ENCODE measurements at regions of chr3 and their contacts with region 1.

Region 1: DNA sequence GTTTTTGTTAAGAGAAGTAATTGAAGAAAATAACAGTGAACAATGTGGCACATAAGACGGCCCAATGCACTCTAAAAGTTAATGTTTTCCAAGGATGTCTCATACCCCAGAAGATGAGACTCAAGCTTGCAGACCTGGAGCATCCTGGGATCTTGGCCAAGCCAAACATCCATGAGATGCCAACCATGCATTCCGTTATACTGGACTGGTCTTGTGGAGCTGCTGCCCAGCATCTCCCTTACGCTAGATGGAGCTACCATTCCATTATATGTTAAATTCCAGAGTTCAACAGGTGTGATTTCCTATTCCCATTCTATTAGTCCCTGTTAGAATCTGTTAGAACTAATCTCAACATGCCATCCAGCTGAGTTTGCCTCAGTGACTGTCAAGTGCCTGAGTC is 181.8 kb downstream of the PDCD6IP start:
- DNase-seq: no peak
- H3K4me3 ChIP-seq: no peak overlapping the region
- H3K27ac ChIP-seq: no peak overlapping the region
- H3K4me1 ChIP-seq: no peaks in the 10 kb centered on the region
- H3K27me3 ChIP-seq: no peaks in the 10 kb centered on the region
- CTCF ChIP-seq: peak in 2 of 3 experiments; percentile 33 to 70

Region 2: DNA sequence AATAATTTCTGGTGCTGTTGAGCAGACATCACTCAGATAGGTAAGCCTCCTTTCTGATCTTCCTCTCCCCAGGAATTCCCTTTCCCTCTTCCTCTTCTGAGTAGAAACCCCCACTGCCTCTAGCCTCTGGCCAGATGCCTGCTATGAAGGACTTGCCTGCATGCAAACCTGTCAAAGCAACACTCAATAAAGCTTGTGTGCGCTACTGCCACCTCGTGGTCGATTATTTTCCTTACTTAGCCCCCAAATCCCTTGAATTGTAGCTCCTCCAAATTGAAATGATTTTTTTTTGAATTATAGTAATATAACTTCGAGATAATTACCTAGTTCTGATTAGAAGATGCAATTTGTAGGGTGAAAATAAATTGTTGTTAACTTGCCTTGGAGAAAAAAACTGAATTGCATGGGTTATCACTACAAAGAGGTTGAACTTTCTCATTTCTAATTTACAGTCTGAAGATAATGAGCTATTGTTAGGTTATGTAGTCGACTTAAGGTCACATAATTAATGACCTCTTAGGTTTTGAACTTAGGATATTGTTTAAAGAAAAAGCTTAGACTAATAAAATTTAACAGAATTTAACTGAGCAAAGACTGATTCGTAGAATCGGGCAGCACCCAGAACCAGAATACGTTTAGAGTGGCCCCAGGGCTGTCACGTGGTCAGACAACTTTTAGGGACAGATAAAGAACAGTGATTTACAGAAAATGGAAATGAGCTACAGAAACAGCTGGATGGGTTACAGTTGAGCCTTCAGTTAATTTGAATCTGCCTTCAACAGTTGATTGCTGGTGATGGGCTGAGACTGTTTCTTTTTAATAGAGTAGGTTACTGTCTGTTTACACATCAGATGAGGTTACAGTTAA is 1928.3 kb after region 1 on chr3:
- intact Hi-C with region 1: loop called (anchors 5 kb)
- DNase-seq: peak in 1 of 2 donors; percentile 73
- H3K4me3 ChIP-seq: no peak overlapping the region
- H3K27ac ChIP-seq: no peak overlapping the region
- H3K4me1 ChIP-seq: no peaks in the 10 kb centered on the region
- H3K27me3 ChIP-seq: no peaks in the 10 kb centered on the region
- CTCF ChIP-seq: peak; percentile 42 to 80 (median 69)